IMR-90 (cell line): ENCODE measurements at regions of chr14 and their contacts with region 1.

Region 1: GRCh38 chr14:88098163-88098562 is 93.2 kb downstream of the GPR65 start:
- DNase-seq: no peak
- ATAC-seq: no peak
- H3K4me3 ChIP-seq: no peak overlapping the region
- H3K27ac ChIP-seq: no peak overlapping the region
- H3K4me1 ChIP-seq: no peaks in the 10 kb centered on the region
- H3K27me3 ChIP-seq: no peaks in the 10 kb centered on the region
- CTCF ChIP-seq: no peak
- POLR2A ChIP-seq: no peak
- RAD21 ChIP-seq: no peak

Region 2: GRCh38 chr14:88023658-88024187 is 74.4 kb before region 1 on chr14:
- CTCF ChIA-PET with region 1: no interaction called
- POLR2A ChIA-PET with region 1: interaction called, 12 read pairs
- dilution Hi-C with region 1: no loop called
- in situ Hi-C with region 1: no loop called
- intact Hi-C with region 1: no loop called
- DNase-seq: no peak
- ATAC-seq: no peak
- H3K4me3 ChIP-seq: no peak overlapping the region
- H3K27ac ChIP-seq: no peak overlapping the region
- H3K4me1 ChIP-seq: no peaks in the 10 kb centered on the region
- H3K27me3 ChIP-seq: no peaks in the 10 kb centered on the region
- CTCF ChIP-seq: no peak
- POLR2A ChIP-seq: no peak
- RAD21 ChIP-seq: no peak